Activated naive CD4-positive, alpha-beta T cell treated with anti-CD3 and anti-CD28 coated beads for 36 hours (primary cell): ENCODE measurements at regions of chr19 and their contacts with region 1.

Region 1: GRCh38 chr19:1825909-1826556 is 14.0 kb upstream of the ATP8B3 start:
- DNase-seq: peak; percentile 78
- H3K4me3 Mint-ChIP-seq: no peak overlapping the region
- H3K27ac Mint-ChIP-seq: no peak overlapping the region
- H3K4me1 Mint-ChIP-seq: peaks cover 4% of the 10 kb centered on the region
- H3K27me3 Mint-ChIP-seq: no peaks in the 10 kb centered on the region

Region 2: GRCh38 chr19:1789261-1790041 is 36.6 kb before region 1 on chr19:
- CTCF ChIA-PET with region 1: interaction called, 4 read pairs
- intact Hi-C with region 1: loop called (anchors 5 kb)
- DNase-seq: no peak
- H3K4me3 Mint-ChIP-seq: no peak overlapping the region
- H3K27ac Mint-ChIP-seq: no peak overlapping the region
- H3K4me1 Mint-ChIP-seq: no peaks in the 10 kb centered on the region
- H3K27me3 Mint-ChIP-seq: peaks cover 14% of the 10 kb centered on the region

Region 3: DNA sequence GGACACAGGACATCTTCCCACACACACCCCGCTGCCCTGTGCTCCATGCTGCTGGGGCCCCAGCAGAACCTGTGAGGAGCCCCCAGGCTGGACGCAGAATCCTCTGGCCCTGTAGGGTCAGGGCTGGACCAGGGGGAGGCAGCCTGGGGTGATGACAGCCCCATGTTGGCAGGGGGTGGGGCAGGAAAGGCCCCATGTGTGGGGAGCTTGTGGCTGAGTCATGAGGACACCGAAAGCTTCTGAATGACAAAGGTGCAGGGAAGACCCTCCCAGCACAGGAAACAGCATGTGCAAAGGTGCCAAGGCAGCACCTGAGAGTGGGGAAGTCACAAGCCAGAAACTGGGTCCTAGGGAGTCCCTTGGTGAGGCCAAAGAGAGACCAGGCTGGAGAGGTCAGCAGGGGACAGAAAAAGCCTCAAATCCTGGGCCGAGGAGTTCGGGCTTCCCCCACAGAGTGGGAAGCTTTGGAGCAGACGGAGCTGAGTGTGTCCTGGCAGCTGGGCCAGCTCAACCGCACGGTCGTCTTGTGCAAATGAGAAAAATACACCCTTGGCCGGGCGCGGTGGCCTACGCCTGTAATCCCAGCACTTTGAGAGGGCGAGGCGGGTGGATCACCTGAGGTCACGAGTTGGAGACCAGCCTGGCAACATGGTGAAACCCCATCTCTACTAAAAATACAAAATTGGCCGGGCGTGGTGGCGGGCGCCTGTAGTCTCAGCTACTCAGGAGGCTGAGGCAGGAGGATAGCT is 31.4 kb before region 1 on chr19:
- CTCF ChIA-PET with region 1: interaction called, 10 read pairs
- intact Hi-C with region 1: loop called (anchors 5 kb)
- DNase-seq: peak; percentile 28
- H3K4me3 Mint-ChIP-seq: no peak overlapping the region
- H3K27ac Mint-ChIP-seq: no peak overlapping the region
- H3K4me1 Mint-ChIP-seq: peaks cover 5% of the 10 kb centered on the region
- H3K27me3 Mint-ChIP-seq: peaks cover 18% of the 10 kb centered on the region

Region 4: GRCh38 chr19:1837625-1838105 is 11.6 kb after region 1 on chr19:
- CTCF ChIA-PET with region 1: interaction called, 42 read pairs
- intact Hi-C with region 1: no loop called
- DNase-seq: peak; percentile 71
- H3K4me3 Mint-ChIP-seq: no peak overlapping the region
- H3K27ac Mint-ChIP-seq: no peak overlapping the region
- H3K4me1 Mint-ChIP-seq: peaks cover 35% of the 10 kb centered on the region
- H3K27me3 Mint-ChIP-seq: no peaks in the 10 kb centered on the region